ENCODE measurements at regions of chrX and their contacts with region 1.

Region 1: GRCh38 chrX:13487731-13488523 is 81.5 kb upstream of the EGFL6 start:
- DNase-seq: no peak
- H3K4me3 ChIP-seq: no peak overlapping the region
- H3K27ac ChIP-seq: peak overlapping the region; percentile 80
- H3K4me1 ChIP-seq: peaks cover 9% of the 10 kb centered on the region
- H3K27me3 ChIP-seq: no peaks in the 10 kb centered on the region
- CTCF ChIP-seq: peak in 2 of 3 experiments; percentile 30 to 82
- POLR2A ChIP-seq: no peak

Region 2: DNA sequence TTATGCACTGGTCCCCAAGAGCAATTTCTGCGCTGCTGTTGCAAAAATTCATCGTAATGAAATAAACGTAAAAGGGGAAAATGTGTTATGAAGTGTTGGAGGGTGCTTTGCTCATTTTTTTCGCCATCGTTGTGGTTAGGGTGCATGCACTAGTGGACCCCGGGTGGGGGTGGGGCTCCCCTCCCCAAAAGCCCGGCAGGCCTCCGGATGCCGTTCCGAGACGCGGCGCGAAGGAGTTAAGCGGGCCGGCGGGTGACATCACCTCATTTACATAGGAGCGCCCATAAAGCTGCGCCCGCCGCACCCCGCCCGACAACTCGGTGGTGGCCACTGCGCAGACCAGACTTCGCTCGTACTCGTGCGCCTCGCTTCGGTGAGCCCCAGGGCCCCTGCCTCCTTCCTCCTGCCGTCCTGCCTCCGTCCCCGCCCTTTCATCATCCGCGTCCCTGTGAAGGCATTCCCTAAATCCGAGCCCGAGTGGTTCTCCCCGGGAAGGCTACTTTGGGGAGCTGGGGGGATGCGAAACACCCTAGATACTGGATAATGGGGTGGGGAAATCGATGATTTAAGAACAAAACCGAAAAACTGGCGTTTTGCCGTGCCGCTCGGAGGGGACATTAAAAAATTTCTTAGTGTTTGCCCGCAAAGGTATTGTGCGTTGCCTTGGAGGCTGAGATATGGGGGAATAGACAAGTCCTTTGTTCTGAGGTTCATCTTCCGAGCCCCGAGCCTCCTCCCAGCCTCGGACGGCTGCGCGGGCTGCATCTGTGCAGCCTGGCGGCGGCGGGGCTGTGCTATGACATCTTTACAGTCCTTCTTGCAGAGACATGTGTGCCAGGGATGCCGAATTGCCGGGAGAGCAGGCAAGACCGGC is 512.9 kb before region 1 on chrX and contains the start of gene TMSB4X:
- intact Hi-C with region 1: loop called (anchors 1 kb)
- DNase-seq: no peak
- H3K4me3 ChIP-seq: peak within 1 kb of the TSS; percentile 49 to 63
- H3K27ac ChIP-seq: peak within 1 kb of the TSS; percentile 92
- H3K4me1 ChIP-seq: no peaks in the 10 kb centered on the region
- H3K27me3 ChIP-seq: no peaks in the 10 kb centered on the region
- CTCF ChIP-seq: no peak
- POLR2A ChIP-seq: peak; percentile 68 to 97
- total RNA-seq, gene TMSB4X: 3,119 TPM

Region 3: GRCh38 chrX:13110433-13111324 is 377.2 kb before region 1 on chrX:
- intact Hi-C with region 1: loop called (anchors 5 kb)
- DNase-seq: peak in 1 of 2 donors; percentile 90
- H3K4me3 ChIP-seq: no peak overlapping the region
- H3K27ac ChIP-seq: peak overlapping the region; percentile 59
- H3K4me1 ChIP-seq: peaks cover 18% of the 10 kb centered on the region
- H3K27me3 ChIP-seq: no peaks in the 10 kb centered on the region
- CTCF ChIP-seq: no peak
- POLR2A ChIP-seq: no peak

Region 4: GRCh38 chrX:13522811-13523210 is 34.9 kb after region 1 on chrX:
- intact Hi-C with region 1: no loop called
- DNase-seq: no peak
- H3K4me3 ChIP-seq: no peak overlapping the region
- H3K27ac ChIP-seq: no peak overlapping the region
- H3K4me1 ChIP-seq: no peaks in the 10 kb centered on the region
- H3K27me3 ChIP-seq: no peaks in the 10 kb centered on the region
- CTCF ChIP-seq: no peak
- POLR2A ChIP-seq: no peak